K562 (cell line): ENCODE measurements at regions of chrX and their contacts with region 1.

Region 1: DNA sequence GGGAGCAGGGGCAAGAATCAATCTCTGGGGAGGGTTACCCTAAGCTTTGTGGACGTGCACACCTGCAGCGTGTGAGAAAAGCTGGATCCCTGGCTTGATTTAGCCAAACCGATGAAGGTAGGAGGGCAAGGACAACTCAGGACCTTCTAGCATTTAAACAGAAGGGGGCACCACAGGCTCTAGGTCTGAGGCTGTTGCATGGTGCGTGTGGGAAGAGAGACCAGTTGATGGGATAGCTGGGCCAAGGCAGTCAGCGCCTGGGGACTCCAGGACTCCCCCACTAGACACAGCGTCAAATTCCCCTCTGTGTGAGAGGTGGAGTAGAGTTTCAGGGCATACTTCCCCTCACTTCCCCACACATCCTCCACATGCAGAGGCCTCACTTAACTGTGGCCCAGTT is 4.3 kb downstream of the GABRQ start:
- DNase-seq: peak; percentile 29 to 63 (median 36)
- ATAC-seq: peak; percentile 73
- H3K4me3 ChIP-seq: no peak overlapping the region
- H3K27ac ChIP-seq: no peak overlapping the region; the same call in 2 of the 3 replicates
- H3K4me1 ChIP-seq: peaks cover 13 to 16% of the 10 kb centered on the region in 2 experiments; a peak in 4 of 5 replicates
- H3K27me3 ChIP-seq: no peaks in the 10 kb centered on the region
- CTCF ChIP-seq: peak; percentile 62 to 72 (median 68)
- EP300 ChIP-seq: no peak
- POLR2A ChIP-seq: no peak
- RAD21 ChIP-seq: peak; percentile 66 to 80

Region 2: DNA sequence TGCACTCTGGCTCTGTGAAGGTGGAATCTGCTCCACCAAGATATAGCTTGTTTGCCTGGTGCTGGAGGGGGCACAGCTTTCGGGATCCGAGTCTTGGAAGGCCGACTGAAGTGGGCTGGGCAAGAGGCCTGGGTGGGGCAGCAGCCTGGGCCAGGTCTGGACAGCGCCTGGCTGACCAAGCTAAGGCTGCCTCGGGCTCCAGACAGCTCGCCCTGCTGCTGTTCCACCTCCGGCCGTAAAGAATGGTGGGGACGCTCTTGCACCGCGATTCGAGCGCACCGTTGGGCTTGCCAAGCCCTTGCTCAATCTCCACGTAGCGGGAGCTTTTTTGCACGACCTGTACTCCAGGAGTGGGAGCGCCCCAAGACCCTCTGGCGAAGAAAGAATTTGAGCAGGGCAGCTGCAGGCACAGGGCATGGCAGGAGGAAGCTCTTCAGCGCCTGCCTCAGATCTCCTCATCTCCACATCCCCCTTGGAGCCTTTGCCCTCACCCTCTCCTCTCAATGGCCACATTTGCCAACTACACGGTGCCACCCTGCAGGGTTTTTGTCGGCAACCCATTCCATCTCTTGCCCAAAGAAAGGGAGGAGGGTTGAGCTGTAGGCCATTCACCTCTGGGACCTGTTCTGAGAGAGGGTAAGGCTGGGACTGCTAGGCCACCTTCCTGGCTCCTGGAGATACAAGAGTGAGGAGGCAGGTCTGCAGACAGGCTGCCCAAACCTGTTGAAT is 888.5 kb before region 1 on chrX:
- CTCF ChIA-PET with region 1: interaction called, 3 read pairs
- POLR2A ChIA-PET with region 1: no interaction called
- in situ Hi-C with region 1: loop called (anchors 5 kb)
- intact Hi-C with region 1: loop called (anchors 2 kb)
- DNase-seq: peak; percentile 64 to 69 (median 66)
- ATAC-seq: peak; percentile 96
- H3K4me3 ChIP-seq: no peak overlapping the region
- H3K27ac ChIP-seq: no peak overlapping the region
- H3K4me1 ChIP-seq: peaks cover 0 to 6% of the 10 kb centered on the region in 2 experiments; a peak in 2 of 5 replicates
- H3K27me3 ChIP-seq: no peaks in the 10 kb centered on the region; a peak in 1 of 5 replicates
- CTCF ChIP-seq: peak; percentile 86 to 88 (median 86)
- EP300 ChIP-seq: no peak
- POLR2A ChIP-seq: no peak
- RAD21 ChIP-seq: peak; percentile 88 to 89

Region 3: DNA sequence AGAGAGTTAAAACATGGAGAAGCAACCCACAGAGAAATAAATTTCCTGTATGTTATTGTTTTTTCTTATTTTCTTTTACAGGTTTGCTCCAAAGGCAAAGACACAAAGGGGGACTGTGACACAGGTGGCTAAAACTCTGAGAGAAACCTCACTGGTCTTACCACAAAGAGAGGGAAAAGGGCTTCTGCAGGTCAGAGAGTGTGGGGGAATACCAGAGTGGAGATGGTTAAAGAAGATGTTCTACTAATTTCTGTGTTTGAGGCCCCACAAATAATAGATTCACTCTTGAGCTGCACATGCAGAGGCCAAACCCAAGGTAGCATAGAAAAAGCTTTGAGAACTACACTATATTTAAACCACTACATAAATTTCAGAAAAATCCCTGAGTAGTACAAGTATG is 342.2 kb before region 1 on chrX:
- CTCF ChIA-PET with region 1: no interaction called
- POLR2A ChIA-PET with region 1: no interaction called
- in situ Hi-C with region 1: no loop called
- intact Hi-C with region 1: no loop called
- DNase-seq: no peak
- ATAC-seq: no peak
- H3K4me3 ChIP-seq: no peak overlapping the region
- H3K27ac ChIP-seq: no peak overlapping the region
- H3K4me1 ChIP-seq: no peaks in the 10 kb centered on the region
- H3K27me3 ChIP-seq: no peaks in the 10 kb centered on the region
- CTCF ChIP-seq: no peak
- EP300 ChIP-seq: no peak
- POLR2A ChIP-seq: no peak
- RAD21 ChIP-seq: no peak

Region 4: GRCh38 chrX:152821145-152821765 is 179.3 kb after region 1 on chrX:
- CTCF ChIA-PET with region 1: interaction called, 14 read pairs
- POLR2A ChIA-PET with region 1: no interaction called
- in situ Hi-C with region 1: no loop called
- intact Hi-C with region 1: loop called (anchors 1 kb)
- DNase-seq: peak; percentile 45 to 57 (median 52)
- ATAC-seq: peak; percentile 68
- H3K4me3 ChIP-seq: no peak overlapping the region
- H3K27ac ChIP-seq: no peak overlapping the region
- H3K4me1 ChIP-seq: peaks cover 0 to 8% of the 10 kb centered on the region in 2 experiments; a peak in 2 of 5 replicates
- H3K27me3 ChIP-seq: peaks cover 3 to 13% of the 10 kb centered on the region in 2 experiments; a peak in 4 of 5 replicates
- CTCF ChIP-seq: peak; percentile 76 to 80 (median 77)
- EP300 ChIP-seq: no peak
- POLR2A ChIP-seq: no peak
- RAD21 ChIP-seq: peak; percentile 52 to 66

Region 5: GRCh38 chrX:152915527-152916241 is 273.7 kb after region 1 on chrX:
- CTCF ChIA-PET with region 1: no interaction called
- POLR2A ChIA-PET with region 1: no interaction called
- in situ Hi-C with region 1: no loop called
- intact Hi-C with region 1: loop called (anchors 10 kb)
- DNase-seq: peak; percentile 57 to 73 (median 69)
- ATAC-seq: peak; percentile 91
- H3K4me3 ChIP-seq: no peak overlapping the region
- H3K27ac ChIP-seq: no peak overlapping the region
- H3K4me1 ChIP-seq: peaks cover 0 to 14% of the 10 kb centered on the region in 2 experiments; a peak in 2 of 5 replicates
- H3K27me3 ChIP-seq: peaks cover 0 to 20% of the 10 kb centered on the region in 2 experiments; a peak in 2 of 5 replicates
- CTCF ChIP-seq: peak; percentile 91 to 96 (median 94)
- EP300 ChIP-seq: no peak
- POLR2A ChIP-seq: no peak
- RAD21 ChIP-seq: peak; percentile 41 to 62